Mammary epithelial cell (primary cell): ENCODE measurements at regions of chr6 and their contacts with region 1.

Region 1: GRCh38 chr6:6131492-6132109 is 124.9 kb upstream of the NRN1 start:
- DNase-seq: peak; percentile 21
- H3K4me3 ChIP-seq: no peak overlapping the region
- H3K27ac ChIP-seq: no peak overlapping the region
- H3K4me1 ChIP-seq: no peaks in the 10 kb centered on the region
- H3K27me3 ChIP-seq: no peaks in the 10 kb centered on the region
- CTCF ChIP-seq: peak; percentile 32 to 41

Region 2: GRCh38 chr6:6191475-6191874 is 59.9 kb after region 1 on chr6:
- CTCF ChIA-PET with region 1: no interaction called
- dilution Hi-C with region 1: loop called (anchors 5 kb)
- in situ Hi-C with region 1: no loop called
- intact Hi-C with region 1: no loop called
- DNase-seq: no peak
- H3K4me3 ChIP-seq: no peak overlapping the region
- H3K27ac ChIP-seq: no peak overlapping the region
- H3K4me1 ChIP-seq: no peaks in the 10 kb centered on the region
- H3K27me3 ChIP-seq: no peaks in the 10 kb centered on the region
- CTCF ChIP-seq: no peak

Region 3: DNA sequence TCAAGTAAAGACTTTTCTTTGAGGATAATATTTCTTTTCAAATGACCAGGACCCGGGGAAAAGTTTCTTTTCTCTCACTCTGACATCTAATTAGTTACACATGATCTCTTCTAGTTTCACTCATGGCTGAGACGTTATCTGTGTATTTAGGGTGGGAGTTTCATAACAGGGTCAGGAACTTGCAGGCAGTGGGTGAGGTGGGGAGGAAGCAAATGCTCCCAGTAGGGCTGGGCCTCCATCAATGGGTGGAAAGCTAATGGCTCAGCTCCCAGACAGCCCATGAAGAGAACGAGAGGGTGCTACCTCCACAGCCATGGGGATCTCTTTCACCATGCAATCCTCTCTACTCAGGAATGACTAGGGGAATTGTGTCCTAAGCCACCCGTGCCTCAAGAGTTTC is 69.6 kb after region 1 on chr6:
- CTCF ChIA-PET with region 1: interaction called, 17 read pairs
- dilution Hi-C with region 1: no loop called
- in situ Hi-C with region 1: no loop called
- intact Hi-C with region 1: no loop called
- DNase-seq: no peak
- H3K4me3 ChIP-seq: no peak overlapping the region
- H3K27ac ChIP-seq: no peak overlapping the region
- H3K4me1 ChIP-seq: no peaks in the 10 kb centered on the region
- H3K27me3 ChIP-seq: no peaks in the 10 kb centered on the region
- CTCF ChIP-seq: no peak